ENCODE measurements at regions of chr9 and their contacts with region 1.

Region 1: DNA sequence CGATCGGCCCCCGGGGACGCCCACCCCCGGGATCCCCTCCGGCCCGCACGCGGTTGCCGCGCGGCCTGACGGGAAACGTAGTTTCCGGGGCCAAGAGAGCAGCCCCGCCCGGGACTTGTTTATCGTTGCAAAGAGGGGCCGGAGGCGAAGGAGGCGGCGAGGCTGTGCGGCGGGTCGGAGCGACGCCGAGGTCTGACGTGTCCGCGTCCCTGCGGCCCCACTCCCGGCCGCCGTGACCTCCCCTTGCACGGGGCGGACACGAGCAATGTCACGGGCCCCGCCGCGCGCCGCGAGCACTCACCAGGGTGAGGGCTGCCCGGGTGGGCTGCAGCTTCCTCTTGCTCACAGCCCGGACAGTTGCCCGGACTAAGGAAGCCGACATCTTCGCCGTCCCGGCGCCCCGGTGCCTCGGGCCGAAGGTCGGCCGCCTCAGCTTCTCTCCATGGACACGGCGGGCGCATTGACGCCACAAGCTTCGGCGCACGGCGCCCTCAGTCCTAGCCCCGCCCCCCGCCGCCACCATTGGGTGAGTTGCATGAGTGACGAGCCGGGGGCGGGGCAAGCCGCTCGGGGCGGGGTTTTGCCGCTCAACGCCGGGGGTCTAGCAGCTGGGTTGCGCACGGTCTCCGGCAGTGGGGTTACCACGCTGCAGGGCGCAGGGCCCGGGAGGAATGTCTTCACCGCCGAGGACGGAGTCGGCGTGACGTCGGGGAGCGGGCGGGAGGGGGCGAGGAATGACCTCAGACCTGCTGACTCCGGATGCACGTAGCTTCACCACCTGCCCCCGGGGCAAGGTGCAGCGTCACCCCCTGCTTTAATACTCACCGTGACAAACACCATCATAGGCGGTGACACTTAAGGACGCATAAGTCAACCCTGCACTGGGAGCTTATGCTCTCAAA is at the start of gene ISCA1:
- DNase-seq: peak; percentile 94 to 99 (median 98)
- ATAC-seq: peak; percentile 83
- H3K4me3 ChIP-seq: peak within 1 kb of the TSS; percentile 86
- H3K4me3 Mint-ChIP-seq: peak within 1 kb of the TSS; percentile 91
- H3K27ac ChIP-seq: peak within 1 kb of the TSS; percentile 94 to 95
- H3K27ac Mint-ChIP-seq: peak within 1 kb of the TSS; percentile 95
- H3K4me1 ChIP-seq: peaks cover 28% of the 10 kb centered on the region
- H3K4me1 Mint-ChIP-seq: peaks cover 47% of the 10 kb centered on the region
- H3K27me3 ChIP-seq: no peaks in the 10 kb centered on the region
- H3K27me3 Mint-ChIP-seq: no peaks in the 10 kb centered on the region
- CTCF ChIP-seq: no peak
- total RNA-seq, gene ISCA1: 85.3 to 91.6 TPM

Region 2: DNA sequence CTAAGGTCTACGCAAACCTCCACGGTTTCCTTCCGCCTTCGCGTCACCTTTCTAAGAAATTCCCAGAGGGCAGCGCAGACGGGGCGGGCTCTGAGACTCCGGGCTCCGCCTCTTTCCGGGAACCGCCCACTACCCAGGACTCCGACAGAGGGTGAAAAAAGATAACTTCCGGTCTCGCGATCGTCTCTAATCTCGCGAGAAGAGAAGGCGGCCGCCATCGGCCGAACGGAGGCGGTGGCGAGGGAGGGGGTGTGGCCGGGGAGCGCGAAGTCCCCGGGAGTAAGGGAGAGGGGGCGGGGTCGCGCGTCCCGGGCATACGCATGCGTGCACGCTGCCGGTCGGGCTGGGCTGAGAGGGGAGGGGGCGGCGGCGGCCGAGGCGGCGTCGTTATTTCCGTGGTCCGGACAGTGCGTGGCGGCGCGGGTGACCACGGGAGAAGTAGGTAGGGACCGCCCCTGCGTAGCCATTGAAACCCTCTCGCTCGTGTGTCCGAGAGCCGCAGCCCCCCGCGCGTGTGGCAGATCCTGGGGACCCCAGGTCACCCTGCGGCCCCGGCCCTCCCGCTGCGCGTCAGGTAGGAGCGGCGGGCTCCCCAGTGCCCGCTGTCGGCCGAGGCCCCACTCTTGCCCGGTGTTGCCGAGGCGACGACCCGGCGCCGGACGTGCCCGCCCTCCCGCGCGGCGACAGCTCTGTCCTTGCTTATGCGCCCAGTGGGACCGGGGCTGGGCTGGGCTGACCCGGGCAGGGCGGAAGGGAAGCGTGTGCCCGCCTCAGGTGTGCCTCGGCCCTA is 341.3 kb before region 1 on chr9 and contains the start of gene NAA35:
- CTCF ChIA-PET with region 1: no interaction called
- POLR2A ChIA-PET with region 1: interaction called, 15 read pairs
- intact Hi-C with region 1: loop called (anchors 5 kb)
- DNase-seq: peak; percentile 98 to 100 (median 99)
- ATAC-seq: peak; percentile 85
- H3K4me3 ChIP-seq: peak within 1 kb of the TSS; percentile 81
- H3K4me3 Mint-ChIP-seq: peak within 1 kb of the TSS; percentile 94
- H3K27ac ChIP-seq: peak within 1 kb of the TSS; percentile 80 to 82
- H3K27ac Mint-ChIP-seq: no peak within 1 kb of the TSS
- H3K4me1 ChIP-seq: peaks cover 24% of the 10 kb centered on the region
- H3K4me1 Mint-ChIP-seq: peaks cover 9% of the 10 kb centered on the region
- H3K27me3 ChIP-seq: no peaks in the 10 kb centered on the region
- H3K27me3 Mint-ChIP-seq: no peaks in the 10 kb centered on the region
- CTCF ChIP-seq: no peak
- total RNA-seq, gene NAA35: 19.4 to 19.8 TPM

Region 3: DNA sequence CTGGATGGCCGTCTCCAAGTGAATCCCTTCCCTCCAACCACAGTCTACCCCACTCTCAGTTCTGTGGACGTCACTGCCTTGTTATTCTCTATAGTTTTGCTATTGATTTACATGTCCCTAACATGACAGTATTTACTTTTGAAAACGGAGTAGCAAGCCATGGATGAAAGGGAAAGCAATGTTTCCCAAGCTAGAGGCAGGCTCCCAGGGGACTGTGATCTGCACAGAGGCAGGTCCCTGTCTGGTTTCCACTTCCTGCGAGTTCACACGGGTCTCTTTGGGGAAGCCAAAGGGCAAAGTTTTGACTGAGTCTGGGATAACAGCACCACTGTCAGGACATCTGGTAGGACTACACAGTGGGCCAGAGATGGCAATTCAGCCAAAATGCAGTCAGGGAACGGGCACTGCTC is 35.6 kb before region 1 on chr9:
- CTCF ChIA-PET with region 1: no interaction called
- POLR2A ChIA-PET with region 1: no interaction called
- intact Hi-C with region 1: no loop called
- DNase-seq: no peak
- ATAC-seq: no peak
- H3K4me3 ChIP-seq: no peak overlapping the region
- H3K4me3 Mint-ChIP-seq: no peak overlapping the region
- H3K27ac ChIP-seq: no peak overlapping the region
- H3K27ac Mint-ChIP-seq: no peak overlapping the region
- H3K4me1 ChIP-seq: no peaks in the 10 kb centered on the region
- H3K4me1 Mint-ChIP-seq: no peaks in the 10 kb centered on the region
- H3K27me3 ChIP-seq: no peaks in the 10 kb centered on the region
- H3K27me3 Mint-ChIP-seq: no peaks in the 10 kb centered on the region
- CTCF ChIP-seq: no peak

Region 4: GRCh38 chr9:86324308-86324707 is 42.0 kb after region 1 on chr9:
- CTCF ChIA-PET with region 1: no interaction called
- POLR2A ChIA-PET with region 1: no interaction called
- intact Hi-C with region 1: loop called in 1 of 2 experiments (anchors 5 kb)
- DNase-seq: no peak
- ATAC-seq: no peak
- H3K4me3 ChIP-seq: no peak overlapping the region
- H3K4me3 Mint-ChIP-seq: no peak overlapping the region
- H3K27ac ChIP-seq: no peak overlapping the region
- H3K27ac Mint-ChIP-seq: no peak overlapping the region
- H3K4me1 ChIP-seq: no peaks in the 10 kb centered on the region
- H3K4me1 Mint-ChIP-seq: no peaks in the 10 kb centered on the region
- H3K27me3 ChIP-seq: no peaks in the 10 kb centered on the region
- H3K27me3 Mint-ChIP-seq: no peaks in the 10 kb centered on the region
- CTCF ChIP-seq: no peak

Region 5: DNA sequence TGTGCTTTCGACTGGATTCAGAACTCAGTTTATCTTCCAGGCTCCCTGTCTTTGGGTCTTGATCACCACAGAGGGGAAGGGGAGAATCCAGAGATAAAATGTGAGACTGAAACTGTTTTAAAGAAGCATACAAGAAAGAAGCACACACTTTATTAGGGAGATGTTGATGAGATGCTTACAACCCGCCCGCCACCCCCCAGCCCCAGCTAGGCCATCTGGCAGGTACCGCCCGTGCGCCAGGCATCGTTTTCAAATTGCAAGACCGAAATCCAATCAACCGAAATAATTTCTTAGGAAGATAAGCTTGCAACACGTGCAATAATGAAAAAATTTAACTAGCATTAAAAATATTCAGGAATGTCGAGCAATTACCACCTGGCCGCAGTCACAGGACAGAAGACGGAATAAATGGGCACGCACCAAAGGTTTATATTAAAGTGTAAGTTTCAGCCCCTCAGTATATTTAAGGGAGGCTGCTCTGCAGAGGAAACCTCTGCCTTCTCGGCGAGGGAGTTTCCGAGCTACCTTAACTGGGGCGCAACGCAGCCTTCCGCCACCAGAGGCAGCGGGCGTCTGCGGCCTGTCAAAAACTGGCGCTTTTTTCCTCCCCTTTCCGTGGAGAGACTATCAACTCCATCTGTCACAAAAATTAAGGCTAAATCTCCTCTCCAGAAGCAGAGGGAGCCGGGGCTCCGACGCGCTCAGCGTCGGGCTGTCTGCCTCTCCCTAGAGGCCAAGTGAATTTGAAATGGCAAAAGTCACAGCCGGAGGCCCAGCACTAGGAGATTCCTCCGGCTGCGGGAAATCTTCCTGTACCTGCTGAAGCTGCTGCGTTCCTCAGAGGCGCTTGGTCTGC is 666.0 kb after region 1 on chr9:
- CTCF ChIA-PET with region 1: no interaction called
- POLR2A ChIA-PET with region 1: interaction called, 9 read pairs
- intact Hi-C with region 1: loop called in 1 of 2 experiments (anchors 5 kb)
- DNase-seq: peak; percentile 51 to 85 (median 62)
- ATAC-seq: peak; percentile 73
- H3K4me3 ChIP-seq: peak overlapping the region; percentile 71
- H3K4me3 Mint-ChIP-seq: peak overlapping the region; percentile 95
- H3K27ac ChIP-seq: no peak overlapping the region
- H3K27ac Mint-ChIP-seq: peak overlapping the region; percentile 62
- H3K4me1 ChIP-seq: peaks cover 18% of the 10 kb centered on the region
- H3K4me1 Mint-ChIP-seq: peaks cover 25% of the 10 kb centered on the region
- H3K27me3 ChIP-seq: peaks cover 16 to 21% of the 10 kb centered on the region in 2 experiments
- H3K27me3 Mint-ChIP-seq: peaks cover 20% of the 10 kb centered on the region
- CTCF ChIP-seq: peak; percentile 87